Activated CD4-positive, alpha-beta T cell treated with anti-CD3 and anti-CD28 coated beads for 36 hours (primary cell): ENCODE measurements at regions of chr19 and their contacts with region 1.

Region 1: DNA sequence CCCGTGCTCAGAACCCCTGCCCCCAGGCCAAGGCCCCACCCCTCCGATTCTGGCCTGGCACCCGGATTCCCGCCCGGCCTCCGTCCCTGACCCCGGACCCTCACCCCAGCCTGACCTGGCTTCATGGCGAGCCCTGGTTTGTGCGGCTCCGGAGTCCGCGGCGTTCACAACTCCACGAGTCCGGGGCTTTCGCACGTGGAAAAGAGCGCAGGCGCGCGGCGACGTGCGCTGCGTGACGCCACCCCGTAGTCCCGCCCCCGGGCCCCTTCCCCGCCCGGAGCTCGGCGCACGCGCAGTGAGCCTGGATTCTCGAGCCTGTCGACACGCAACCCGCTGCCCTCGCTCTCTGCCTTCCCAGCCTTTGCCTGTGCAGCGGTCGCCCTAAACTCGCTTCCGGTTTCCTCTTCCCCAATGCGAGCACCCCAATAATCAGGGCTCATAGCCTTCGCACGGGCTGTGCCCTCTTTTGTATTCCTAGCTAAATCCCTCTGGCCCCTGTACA is at the start of gene FBL:
- DNase-seq: peak; percentile 99
- ATAC-seq: peak; percentile 88
- H3K4me3 Mint-ChIP-seq: peak within 1 kb of the TSS; percentile 96
- H3K27ac Mint-ChIP-seq: peak within 1 kb of the TSS; percentile 94
- H3K4me1 Mint-ChIP-seq: peaks cover 48% of the 10 kb centered on the region
- H3K27me3 Mint-ChIP-seq: no peaks in the 10 kb centered on the region
- total RNA-seq, gene FBL: 742 to 890 TPM

Region 2: GRCh38 chr19:39539519-39540332 is 306.5 kb before region 1 on chr19 and contains the start of gene EID2:
- CTCF ChIA-PET with region 1: interaction called, 5 read pairs
- POLR2A ChIA-PET with region 1: no interaction called
- intact Hi-C with region 1: loop called (anchors 2 to 10 kb)
- DNase-seq: peak; percentile 98
- ATAC-seq: peak; percentile 80
- H3K4me3 Mint-ChIP-seq: peak within 1 kb of the TSS; percentile 84
- H3K27ac Mint-ChIP-seq: peak within 1 kb of the TSS; percentile 94
- H3K4me1 Mint-ChIP-seq: peaks cover 53% of the 10 kb centered on the region
- H3K27me3 Mint-ChIP-seq: no peaks in the 10 kb centered on the region
- total RNA-seq, gene EID2: 9.0 to 10.7 TPM

Region 3: GRCh38 chr19:39765091-39766076 is 80.8 kb before region 1 on chr19:
- CTCF ChIA-PET with region 1: interaction called, 4 read pairs
- POLR2A ChIA-PET with region 1: no interaction called
- intact Hi-C with region 1: loop called in 1 of 2 experiments (anchors 2 kb)
- DNase-seq: peak; percentile 63
- ATAC-seq: no peak
- H3K4me3 Mint-ChIP-seq: no peak overlapping the region
- H3K27ac Mint-ChIP-seq: no peak overlapping the region
- H3K4me1 Mint-ChIP-seq: no peaks in the 10 kb centered on the region
- H3K27me3 Mint-ChIP-seq: peaks cover 21% of the 10 kb centered on the region

Region 4: GRCh38 chr19:39824143-39825092 is 21.8 kb before region 1 on chr19:
- CTCF ChIA-PET with region 1: interaction called, 15 read pairs
- POLR2A ChIA-PET with region 1: no interaction called
- intact Hi-C with region 1: loop called in 1 of 2 experiments (anchors 1 kb)
- DNase-seq: peak; percentile 94
- ATAC-seq: peak; percentile 100
- H3K4me3 Mint-ChIP-seq: no peak overlapping the region
- H3K27ac Mint-ChIP-seq: no peak overlapping the region
- H3K4me1 Mint-ChIP-seq: peaks cover 6% of the 10 kb centered on the region
- H3K27me3 Mint-ChIP-seq: no peaks in the 10 kb centered on the region

Region 5: DNA sequence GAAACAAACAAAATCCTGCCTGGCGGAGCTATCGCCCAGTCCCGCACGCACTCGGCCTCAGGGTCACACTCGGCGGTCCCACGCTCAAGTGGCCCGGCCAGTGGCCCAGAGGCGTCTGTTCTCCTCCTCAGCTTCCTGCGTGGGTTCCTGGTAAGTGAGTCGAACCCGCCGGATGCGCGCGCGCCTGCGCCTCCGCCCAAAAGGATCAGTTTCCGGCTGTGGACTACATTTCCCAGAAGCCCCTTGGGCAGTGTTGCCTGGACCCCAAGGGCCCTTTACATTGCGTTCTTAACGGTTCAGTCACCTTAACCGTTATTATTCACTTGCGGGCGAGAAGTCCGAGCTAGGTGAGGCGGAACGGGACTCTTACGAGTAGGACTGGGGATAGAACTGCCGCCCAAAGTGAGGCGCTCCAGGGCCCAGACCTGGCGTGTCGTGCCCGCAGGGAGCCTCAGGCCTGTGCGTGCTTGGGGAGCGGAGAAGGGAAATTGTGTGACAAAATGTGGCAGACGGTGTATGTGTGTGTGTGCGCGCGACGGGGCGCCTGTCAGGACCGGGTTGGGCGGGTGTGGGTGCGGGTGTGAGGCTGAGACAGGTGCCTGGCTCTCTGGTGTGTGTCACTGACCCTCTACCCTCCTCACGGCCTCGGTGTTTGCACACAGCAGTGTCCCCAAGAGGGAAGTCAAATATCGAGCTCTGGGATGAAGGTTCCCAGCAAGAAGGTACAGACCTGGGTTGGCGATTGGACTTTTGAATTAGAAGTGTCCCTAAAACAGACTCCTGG is 150.8 kb after region 1 on chr19 and contains the start of gene ZNF546:
- CTCF ChIA-PET with region 1: no interaction called
- POLR2A ChIA-PET with region 1: no interaction called
- intact Hi-C with region 1: loop called in 1 of 2 experiments (anchors 1 kb)
- DNase-seq: peak; percentile 94
- ATAC-seq: peak; percentile 90
- H3K4me3 Mint-ChIP-seq: peak within 1 kb of the TSS; percentile 90
- H3K27ac Mint-ChIP-seq: peak within 1 kb of the TSS; percentile 99
- H3K4me1 Mint-ChIP-seq: peaks cover 48% of the 10 kb centered on the region
- H3K27me3 Mint-ChIP-seq: no peaks in the 10 kb centered on the region
- total RNA-seq, gene ZNF546: 6.3 to 6.9 TPM